Activated CD8-positive, alpha-beta memory T cell treated with anti-CD3 and anti-CD28 coated beads, Interleukin-2, amount 10 ng/mL, durations not matched to agents 7 days and 5 days (primary cell): ENCODE measurements at regions of chr19 and their contacts with region 1.

Region 1: DNA sequence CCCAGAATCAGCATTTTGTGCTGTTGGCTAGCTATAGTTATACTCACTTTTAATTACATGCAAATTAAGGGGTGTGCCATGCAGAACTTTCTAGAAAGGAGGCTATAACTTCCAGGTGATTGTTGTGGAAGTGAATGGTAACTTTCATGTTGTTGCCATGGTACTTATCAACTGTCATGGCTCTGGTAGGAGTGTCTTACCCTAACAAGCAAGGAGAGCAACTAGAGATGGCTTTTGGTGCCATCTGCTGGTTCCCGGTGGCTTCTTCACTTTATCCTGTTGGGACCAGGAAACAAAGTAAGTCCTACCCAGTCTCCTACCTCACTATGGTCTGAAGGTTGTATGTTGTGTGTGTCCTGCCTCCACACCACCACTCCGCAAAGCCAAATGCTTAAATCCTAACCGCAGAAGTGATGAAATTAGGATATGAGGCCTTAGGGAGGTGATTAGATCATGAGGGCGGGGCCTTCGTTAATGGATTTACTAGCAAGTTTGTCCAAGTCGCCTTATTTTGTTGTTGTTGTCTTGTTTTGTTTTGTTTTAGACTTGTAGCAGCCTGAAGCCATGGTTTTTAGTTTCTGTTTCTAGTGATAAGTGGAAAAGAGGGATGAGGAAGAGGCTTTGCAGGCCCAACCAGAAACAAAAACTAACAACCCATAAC is 22.6 kb downstream of the FBXL12 start:
- DNase-seq: peak; percentile 94
- ATAC-seq: peak; percentile 46
- H3K4me3 Mint-ChIP-seq: no peak overlapping the region
- H3K27ac Mint-ChIP-seq: peak overlapping the region; percentile 71
- H3K4me1 Mint-ChIP-seq: peaks cover 37% of the 10 kb centered on the region
- H3K27me3 Mint-ChIP-seq: no peaks in the 10 kb centered on the region

Region 2: DNA sequence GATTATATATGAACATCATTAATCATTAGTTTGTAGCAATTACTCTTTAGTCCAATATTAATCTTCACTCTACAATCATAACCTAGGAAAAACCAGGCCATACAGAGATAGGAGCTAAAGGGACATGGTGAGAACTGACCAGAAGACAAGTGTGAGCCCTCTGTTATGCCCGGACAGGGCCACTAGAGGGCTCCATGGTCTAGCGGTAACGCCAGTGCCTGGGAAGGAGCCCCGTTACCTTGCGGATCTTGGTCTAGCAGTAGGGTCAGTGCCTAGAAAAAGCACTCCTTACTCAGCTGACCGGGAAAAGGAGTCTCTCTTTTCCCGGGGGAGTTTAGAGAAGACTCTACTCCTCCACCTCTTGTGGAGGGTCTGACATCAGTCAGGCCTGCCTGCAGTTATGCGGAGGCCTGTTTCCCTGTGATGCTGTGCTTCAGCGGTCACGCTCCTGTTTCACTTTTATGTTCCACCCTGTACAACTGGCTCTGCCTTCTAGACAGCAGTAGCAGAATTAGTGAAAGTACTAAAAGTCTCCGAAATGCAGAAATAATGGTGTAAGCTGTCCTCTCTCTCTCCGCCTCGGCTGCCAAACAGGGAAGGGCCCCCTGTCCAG is 590.6 kb before region 1 on chr19:
- CTCF ChIA-PET with region 1: interaction called, 11 read pairs
- DNase-seq: peak; percentile 73
- ATAC-seq: peak; percentile 57
- H3K4me3 Mint-ChIP-seq: peak overlapping the region; percentile 52
- H3K27ac Mint-ChIP-seq: no peak overlapping the region
- H3K4me1 Mint-ChIP-seq: no peaks in the 10 kb centered on the region
- H3K27me3 Mint-ChIP-seq: peaks cover 7% of the 10 kb centered on the region

Region 3: GRCh38 chr19:9584073-9584833 is 212.0 kb before region 1 on chr19 and contains the start of gene ZNF121:
- CTCF ChIA-PET with region 1: interaction called, 14 read pairs
- DNase-seq: peak; percentile 89
- ATAC-seq: peak; percentile 87
- H3K4me3 Mint-ChIP-seq: peak within 1 kb of the TSS; percentile 92
- H3K27ac Mint-ChIP-seq: peak within 1 kb of the TSS; percentile 94
- H3K4me1 Mint-ChIP-seq: peaks cover 29% of the 10 kb centered on the region
- H3K27me3 Mint-ChIP-seq: peaks cover 7% of the 10 kb centered on the region
- total RNA-seq, gene ZNF121: 53.9 to 55.7 TPM

Region 4: GRCh38 chr19:9621156-9622037 is 174.8 kb before region 1 on chr19 and contains the start of gene ZNF561:
- CTCF ChIA-PET with region 1: interaction called, 14 read pairs
- DNase-seq: peak; percentile 92
- ATAC-seq: peak; percentile 90
- H3K4me3 Mint-ChIP-seq: peak within 1 kb of the TSS; percentile 99
- H3K27ac Mint-ChIP-seq: peak within 1 kb of the TSS; percentile 99
- H3K4me1 Mint-ChIP-seq: peaks cover 27% of the 10 kb centered on the region
- H3K27me3 Mint-ChIP-seq: no peaks in the 10 kb centered on the region
- total RNA-seq, gene ZNF561: 23.0 to 30.8 TPM